ENCODE measurements at regions of chr16 and their contacts with region 1.

Region 1: DNA sequence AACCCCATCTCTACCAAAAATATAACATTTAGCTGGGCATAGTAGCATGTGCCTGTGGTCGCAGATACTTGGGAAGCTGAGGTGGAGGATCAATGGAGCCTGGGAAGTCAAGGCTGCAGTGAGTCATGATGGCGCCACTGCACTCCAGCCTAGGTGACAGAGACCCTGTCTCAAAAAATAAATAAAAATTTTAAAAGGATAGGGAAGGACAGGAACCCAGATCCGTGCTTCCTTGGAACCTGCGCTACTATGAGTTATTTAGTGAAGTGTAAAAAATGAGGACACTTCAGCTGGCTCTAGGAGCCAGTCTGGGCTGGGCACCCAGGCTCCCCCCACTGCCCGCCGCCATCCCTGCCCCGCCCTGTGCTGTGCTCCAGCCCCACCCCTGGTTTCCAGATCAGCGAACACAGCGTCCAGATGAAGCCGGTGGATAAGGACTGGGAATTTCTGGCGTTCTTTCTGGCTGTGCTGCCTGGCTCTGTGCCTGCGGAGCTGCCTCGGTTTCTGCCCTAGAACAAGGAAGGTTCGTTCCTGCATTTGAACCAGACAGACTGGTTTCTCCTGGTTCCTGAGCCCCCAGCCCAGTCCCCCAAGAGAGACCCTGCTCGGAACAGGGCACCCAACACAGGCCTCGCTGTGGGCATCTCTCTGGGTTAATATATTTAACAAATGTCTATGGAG is 18.5 kb downstream of the PLLP start:
- DNase-seq: no peak
- ATAC-seq: no peak
- H3K4me3 ChIP-seq: peak overlapping the region; percentile 39
- H3K4me3 Mint-ChIP-seq: peak overlapping the region; percentile 63 to 81 (median 74)
- H3K27ac ChIP-seq: peak overlapping the region; percentile 74
- H3K27ac Mint-ChIP-seq: peak overlapping the region; percentile 36 to 99 (median 97)
- H3K4me1 ChIP-seq: peaks cover 14 to 50% of the 10 kb centered on the region in 2 donors
- H3K4me1 Mint-ChIP-seq: peaks cover 22 to 58% (median 52%) of the 10 kb centered on the region in 7 donors
- H3K27me3 ChIP-seq: no peaks in the 10 kb centered on the region
- H3K27me3 Mint-ChIP-seq: no peaks in the 10 kb centered on the region

Region 2: DNA sequence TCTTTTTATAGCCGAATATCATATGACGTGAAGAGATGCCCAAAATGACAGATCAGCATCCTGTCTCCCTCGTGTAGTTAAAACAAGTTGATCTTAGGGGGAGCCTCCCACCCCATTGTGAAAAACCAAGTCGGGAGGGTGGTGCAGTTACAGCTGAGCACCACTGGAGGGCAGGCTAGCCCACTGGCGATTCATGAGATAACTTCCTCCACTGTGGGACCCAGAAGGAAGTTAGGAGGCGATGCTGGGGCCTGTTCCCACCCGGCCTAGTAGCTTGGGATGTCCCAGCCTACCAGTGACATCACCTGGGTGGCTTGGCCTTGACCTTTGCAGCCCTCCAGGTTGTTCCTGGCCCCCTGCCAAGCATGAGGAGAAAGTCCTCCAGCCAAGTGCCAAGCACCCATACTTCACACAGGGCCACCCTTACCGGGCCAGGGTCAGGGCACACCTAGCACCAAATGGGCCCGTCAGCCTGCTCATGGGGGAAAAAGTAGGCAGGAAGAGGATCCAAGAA is 181.7 kb before region 1 on chr16:
- CTCF ChIA-PET with region 1: no interaction called
- POLR2A ChIA-PET with region 1: no interaction called
- intact Hi-C with region 1: no loop called
- DNase-seq: peak; percentile 52 to 86 (median 80)
- ATAC-seq: peak; percentile 98
- H3K4me3 ChIP-seq: no peak overlapping the region
- H3K4me3 Mint-ChIP-seq: peak overlapping the region in 2 of 10 donors; percentile 3 to 37
- H3K27ac ChIP-seq: peak overlapping the region; percentile 72
- H3K27ac Mint-ChIP-seq: peak overlapping the region; percentile 19 to 97 (median 90)
- H3K4me1 ChIP-seq: peaks cover 11% of the 10 kb centered on the region in 2 donors
- H3K4me1 Mint-ChIP-seq: peaks cover 6 to 16% (median 14%) of the 10 kb centered on the region in 7 donors
- H3K27me3 ChIP-seq: no peaks in the 10 kb centered on the region
- H3K27me3 Mint-ChIP-seq: no peaks in the 10 kb centered on the region

Region 3: DNA sequence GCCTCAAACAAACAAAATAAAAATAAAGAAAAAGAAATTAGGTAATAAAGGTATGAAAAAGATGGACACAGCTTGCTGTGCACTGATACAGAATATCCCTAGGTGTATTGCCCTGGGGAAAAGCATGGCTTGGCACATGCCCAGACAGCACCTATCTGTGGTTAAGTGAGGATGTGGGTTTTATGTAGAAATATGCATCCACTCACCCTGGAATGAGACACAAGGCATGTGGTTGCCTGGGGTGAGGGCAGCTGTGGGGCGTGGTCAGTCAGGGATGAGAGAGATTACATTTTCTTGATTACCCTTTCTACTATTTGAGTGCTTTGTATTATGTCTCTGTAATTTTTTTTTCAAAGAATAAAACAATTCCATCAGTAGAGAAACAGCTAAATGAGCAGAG is 11.6 kb after region 1 on chr16:
- CTCF ChIA-PET with region 1: interaction called, 4 read pairs
- POLR2A ChIA-PET with region 1: interaction called, 36 read pairs
- intact Hi-C with region 1: loop called in 1 of 2 experiments (anchors 1 kb)
- DNase-seq: peak in 8 of 9 donors; percentile 45 to 81 (median 76)
- ATAC-seq: peak; percentile 92
- H3K4me3 ChIP-seq: no peak overlapping the region
- H3K4me3 Mint-ChIP-seq: peak overlapping the region; percentile 58 to 86 (median 78)
- H3K27ac ChIP-seq: no peak overlapping the region
- H3K27ac Mint-ChIP-seq: peak overlapping the region; percentile 36 to 93 (median 85)
- H3K4me1 ChIP-seq: peaks cover 12 to 42% of the 10 kb centered on the region in 2 donors
- H3K4me1 Mint-ChIP-seq: peaks cover 34 to 79% (median 60%) of the 10 kb centered on the region in 7 donors
- H3K27me3 ChIP-seq: no peaks in the 10 kb centered on the region
- H3K27me3 Mint-ChIP-seq: peaks cover 0 to 19% (median 0%) of the 10 kb centered on the region in 5 donors

Region 4: DNA sequence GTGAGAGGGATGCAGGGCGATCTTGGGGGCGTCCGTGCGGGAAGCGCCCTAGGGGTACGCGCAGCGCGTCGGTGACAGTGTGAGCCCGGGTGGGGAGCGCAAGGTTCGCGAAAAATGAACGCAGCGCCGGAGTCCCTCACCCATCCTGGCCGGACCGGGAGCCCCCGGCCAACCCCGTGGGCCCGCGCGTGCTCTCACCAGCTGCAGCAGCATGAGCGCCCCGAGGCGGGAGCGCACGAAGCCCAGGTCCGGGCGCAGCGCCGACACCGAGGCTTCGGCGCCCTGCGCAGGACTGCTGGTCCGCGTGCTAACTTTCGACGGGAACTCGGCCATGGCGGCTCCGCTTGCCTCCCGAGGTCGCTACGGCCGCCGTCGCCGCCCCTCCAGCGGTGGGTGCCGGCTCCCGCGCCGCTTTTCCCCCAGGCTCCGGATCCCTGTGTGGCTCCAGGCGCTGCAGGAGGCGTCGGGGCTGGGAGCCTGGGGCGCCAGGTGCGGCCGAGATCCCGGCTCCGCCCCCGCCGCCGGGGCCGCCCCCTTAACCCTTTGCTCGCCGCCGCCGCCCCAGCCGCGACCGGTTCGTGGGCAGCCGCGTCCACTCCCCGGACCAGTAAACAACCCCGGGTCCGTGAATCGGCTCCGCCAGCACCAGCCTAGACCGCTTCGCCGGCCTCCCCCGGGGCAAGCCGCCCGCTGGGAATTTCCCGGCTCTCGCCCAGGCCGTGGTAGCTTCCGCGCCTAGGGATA is 18.4 kb after region 1 on chr16 and contains the start of gene PLLP:
- CTCF ChIA-PET with region 1: interaction called, 4 read pairs
- POLR2A ChIA-PET with region 1: interaction called, 8 read pairs
- intact Hi-C with region 1: loop called in 1 of 2 experiments (anchors 2 kb)
- DNase-seq: peak; percentile 30 to 66 (median 51)
- ATAC-seq: peak; percentile 82
- H3K4me3 ChIP-seq: peak within 1 kb of the TSS; percentile 60
- H3K4me3 Mint-ChIP-seq: peak within 1 kb of the TSS; percentile 77 to 89 (median 84)
- H3K27ac ChIP-seq: peak within 1 kb of the TSS; percentile 59
- H3K27ac Mint-ChIP-seq: peak within 1 kb of the TSS in 8 of 9 donors; percentile 10 to 94 (median 64)
- H3K4me1 ChIP-seq: peaks cover 0 to 25% of the 10 kb centered on the region in 2 donors
- H3K4me1 Mint-ChIP-seq: peaks cover 20 to 51% (median 41%) of the 10 kb centered on the region in 7 donors
- H3K27me3 ChIP-seq: peaks cover 0 to 8% of the 10 kb centered on the region in 2 donors
- H3K27me3 Mint-ChIP-seq: peaks cover 0 to 41% (median 0%) of the 10 kb centered on the region in 5 donors
- total RNA-seq, gene PLLP: 0.36 to 8.4 (median 3.3) TPM